CD8-positive, alpha-beta memory T cell (primary cell): ENCODE measurements at regions of chr9 and their contacts with region 1.

Region 1: DNA sequence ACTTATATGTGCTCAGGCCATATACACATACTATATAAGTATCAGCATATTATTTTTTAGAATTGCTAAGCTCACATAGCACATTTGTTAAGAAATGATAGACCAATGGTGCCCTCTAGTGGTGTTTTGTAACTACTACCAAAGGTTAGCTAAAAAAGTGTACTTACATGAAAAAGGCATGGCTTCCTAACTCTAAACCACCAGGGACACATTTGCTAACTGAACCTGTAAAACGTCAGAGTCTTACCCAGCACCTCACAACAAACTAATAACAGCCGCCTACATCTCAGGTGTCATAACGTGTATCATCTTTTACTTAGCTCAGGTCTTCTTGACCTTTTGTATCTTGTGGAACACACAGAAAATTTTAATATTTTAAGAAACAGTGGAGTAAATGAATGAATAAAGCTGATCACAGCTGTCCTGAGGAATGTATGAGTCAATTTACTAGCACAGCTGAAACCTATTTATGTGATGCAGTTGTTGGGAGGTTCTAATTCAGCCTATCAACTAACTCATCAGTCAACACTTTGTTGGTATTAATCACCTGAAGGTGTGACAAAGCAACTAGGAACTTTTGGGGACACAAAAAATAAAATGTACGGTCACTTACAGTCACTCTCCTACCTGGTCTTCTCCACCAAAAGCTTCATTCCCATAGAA is 72.9 kb downstream of the BAAT start:
- DNase-seq: peak in 2 of 5 donors; percentile 23 to 35
- H3K4me3 ChIP-seq: no peak overlapping the region
- H3K4me3 Mint-ChIP-seq: no peak overlapping the region
- H3K27ac ChIP-seq: no peak overlapping the region
- H3K27ac Mint-ChIP-seq: no peak overlapping the region
- H3K4me1 ChIP-seq: no peaks in the 10 kb centered on the region
- H3K4me1 Mint-ChIP-seq: no peaks in the 10 kb centered on the region
- H3K27me3 ChIP-seq: no peaks in the 10 kb centered on the region
- H3K27me3 Mint-ChIP-seq: peaks cover 0 to 17% of the 10 kb centered on the region in 2 donors

Region 2: DNA sequence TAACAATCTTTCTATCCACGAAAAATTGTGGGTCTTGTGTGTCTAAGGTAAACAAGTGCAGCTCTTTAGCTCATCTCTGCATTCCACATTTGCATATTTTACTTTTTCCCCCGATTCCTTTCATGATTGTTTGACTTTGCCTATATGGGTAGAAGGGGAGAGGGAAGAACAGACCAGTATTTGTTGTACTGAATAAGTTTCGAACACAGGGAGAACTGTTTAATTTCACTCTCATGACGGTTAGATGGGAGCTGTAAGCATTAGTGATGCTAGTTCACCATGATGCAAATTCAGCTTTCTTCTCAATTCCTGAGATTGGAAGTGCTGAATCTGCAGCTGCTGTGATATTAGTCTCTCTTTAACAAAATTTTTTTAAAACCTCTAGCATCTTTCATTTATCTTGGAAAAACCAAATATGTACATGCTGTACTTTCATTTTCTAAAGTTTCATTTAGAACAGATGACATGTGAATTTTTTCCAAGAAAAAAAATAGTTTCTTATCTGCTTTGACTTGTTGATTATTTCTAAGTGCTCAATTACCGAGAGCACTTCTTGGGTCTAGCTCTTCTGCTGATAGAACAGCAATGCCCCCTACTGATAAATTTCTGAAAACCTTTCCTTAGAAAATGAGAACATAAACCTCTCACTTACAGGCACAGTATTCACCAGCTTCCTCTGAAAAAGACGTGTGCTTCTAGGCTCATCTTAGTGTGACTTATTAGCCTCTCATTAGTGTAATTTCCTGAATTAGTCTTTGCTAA is 76.6 kb before region 1 on chr9:
- CTCF ChIA-PET with region 1: no interaction called
- POLR2A ChIA-PET with region 1: no interaction called
- DNase-seq: no peak
- H3K4me3 ChIP-seq: no peak overlapping the region
- H3K4me3 Mint-ChIP-seq: no peak overlapping the region
- H3K27ac ChIP-seq: no peak overlapping the region
- H3K27ac Mint-ChIP-seq: no peak overlapping the region
- H3K4me1 ChIP-seq: no peaks in the 10 kb centered on the region
- H3K4me1 Mint-ChIP-seq: no peaks in the 10 kb centered on the region
- H3K27me3 ChIP-seq: no peaks in the 10 kb centered on the region
- H3K27me3 Mint-ChIP-seq: no peaks in the 10 kb centered on the region

Region 3: GRCh38 chr9:101299901-101300300 is 12.0 kb before region 1 on chr9:
- CTCF ChIA-PET with region 1: interaction called, 10 read pairs
- POLR2A ChIA-PET with region 1: no interaction called
- DNase-seq: no peak
- H3K4me3 ChIP-seq: no peak overlapping the region
- H3K4me3 Mint-ChIP-seq: no peak overlapping the region
- H3K27ac ChIP-seq: no peak overlapping the region
- H3K27ac Mint-ChIP-seq: no peak overlapping the region
- H3K4me1 ChIP-seq: no peaks in the 10 kb centered on the region
- H3K4me1 Mint-ChIP-seq: no peaks in the 10 kb centered on the region
- H3K27me3 ChIP-seq: no peaks in the 10 kb centered on the region
- H3K27me3 Mint-ChIP-seq: no peaks in the 10 kb centered on the region

Region 4: GRCh38 chr9:101324245-101324804 is 12.4 kb after region 1 on chr9:
- CTCF ChIA-PET with region 1: no interaction called
- POLR2A ChIA-PET with region 1: no interaction called
- DNase-seq: no peak
- H3K4me3 ChIP-seq: no peak overlapping the region
- H3K4me3 Mint-ChIP-seq: no peak overlapping the region
- H3K27ac ChIP-seq: no peak overlapping the region
- H3K27ac Mint-ChIP-seq: no peak overlapping the region
- H3K4me1 ChIP-seq: no peaks in the 10 kb centered on the region
- H3K4me1 Mint-ChIP-seq: no peaks in the 10 kb centered on the region
- H3K27me3 ChIP-seq: no peaks in the 10 kb centered on the region
- H3K27me3 Mint-ChIP-seq: peaks cover 10 to 32% of the 10 kb centered on the region in 2 donors